HepG2 (cell line): ENCODE measurements at regions of chr1 and their contacts with region 1.

Region 1: GRCh38 chr1:64136752-64137411 is 66.5 kb upstream of the UBE2U start:
- DNase-seq: peak; percentile 56
- ATAC-seq: peak; percentile 90
- H3K4me3 ChIP-seq: no peak overlapping the region
- H3K27ac ChIP-seq: no peak overlapping the region
- H3K4me1 ChIP-seq: no peaks in the 10 kb centered on the region
- H3K27me3 ChIP-seq: no peaks in the 10 kb centered on the region
- CTCF ChIP-seq: peak; percentile 82
- EP300 ChIP-seq: no peak
- POLR2A ChIP-seq: no peak
- RAD21 ChIP-seq: peak; percentile 46; the same call in 1 of the 2 replicates

Region 2: GRCh38 chr1:63557365-63557987 is 579.4 kb before region 1 on chr1:
- CTCF ChIA-PET with region 1: no interaction called
- POLR2A ChIA-PET with region 1: no interaction called
- in situ Hi-C with region 1: no loop called
- intact Hi-C with region 1: loop called (anchors 1 kb)
- DNase-seq: peak; percentile 24
- ATAC-seq: peak; percentile 73
- H3K4me3 ChIP-seq: no peak overlapping the region
- H3K27ac ChIP-seq: no peak overlapping the region
- H3K4me1 ChIP-seq: no peaks in the 10 kb centered on the region
- H3K27me3 ChIP-seq: no peaks in the 10 kb centered on the region
- CTCF ChIP-seq: peak; percentile 62
- EP300 ChIP-seq: no peak
- POLR2A ChIP-seq: no peak
- RAD21 ChIP-seq: no peak

Region 3: GRCh38 chr1:63615768-63616420 is 521.0 kb before region 1 on chr1:
- CTCF ChIA-PET with region 1: interaction called, 21 read pairs
- POLR2A ChIA-PET with region 1: no interaction called
- in situ Hi-C with region 1: loop called (anchors 5 kb)
- intact Hi-C with region 1: loop called (anchors 1 kb)
- DNase-seq: peak; percentile 67
- ATAC-seq: peak; percentile 86
- H3K4me3 ChIP-seq: no peak overlapping the region
- H3K27ac ChIP-seq: no peak overlapping the region
- H3K4me1 ChIP-seq: peaks cover 62% of the 10 kb centered on the region
- H3K27me3 ChIP-seq: no peaks in the 10 kb centered on the region
- CTCF ChIP-seq: peak; percentile 77
- EP300 ChIP-seq: no peak
- POLR2A ChIP-seq: no peak
- RAD21 ChIP-seq: peak; percentile 51; the same call in 1 of the 2 replicates

Region 4: DNA sequence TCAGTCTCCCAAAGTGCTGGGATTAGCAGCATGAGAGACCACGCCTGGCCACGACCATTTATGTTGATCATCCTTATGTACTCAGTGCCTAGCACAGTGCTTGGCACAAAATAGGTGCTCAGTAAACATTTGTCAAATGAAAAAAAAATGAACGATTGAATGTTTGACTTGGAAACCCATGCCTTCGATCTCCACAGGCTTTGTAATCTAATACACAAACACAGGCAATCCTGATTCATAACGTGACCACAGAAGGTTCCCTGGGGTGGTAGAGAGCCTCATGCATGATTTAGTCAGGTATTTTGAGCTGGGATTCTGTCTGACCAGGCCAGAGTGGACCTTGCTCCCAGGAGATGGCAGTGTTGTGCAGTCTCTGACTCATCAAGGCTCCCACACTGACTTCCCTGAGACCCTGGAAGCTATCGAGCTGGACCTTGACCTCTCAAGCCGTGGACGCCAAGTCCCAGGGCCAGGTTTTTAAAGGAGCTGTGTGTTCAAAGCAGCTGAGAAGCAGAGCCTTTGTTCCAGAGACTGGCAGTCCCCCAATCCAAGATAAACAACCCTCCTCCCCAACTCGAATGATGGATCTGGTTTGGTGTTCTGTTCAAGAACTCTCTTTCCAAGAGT is 462.5 kb before region 1 on chr1:
- CTCF ChIA-PET with region 1: interaction called, 6 read pairs
- POLR2A ChIA-PET with region 1: interaction called, 4 read pairs
- in situ Hi-C with region 1: loop called (anchors 10 kb)
- intact Hi-C with region 1: loop called (anchors 1 kb)
- DNase-seq: peak; percentile 94
- ATAC-seq: peak; percentile 95
- H3K4me3 ChIP-seq: 0 out of 6 replicates have a peak overlapping the region, but pooled peaks of 1 of the 3 experiments have one; percentile 6
- H3K27ac ChIP-seq: peak overlapping the region; percentile 54
- H3K4me1 ChIP-seq: peaks cover 38% of the 10 kb centered on the region
- H3K27me3 ChIP-seq: no peaks in the 10 kb centered on the region
- CTCF ChIP-seq: peak; percentile 96
- EP300 ChIP-seq: no peak; a peak in 1 of 4 replicates
- POLR2A ChIP-seq: no peak
- RAD21 ChIP-seq: peak; percentile 71

Region 5: DNA sequence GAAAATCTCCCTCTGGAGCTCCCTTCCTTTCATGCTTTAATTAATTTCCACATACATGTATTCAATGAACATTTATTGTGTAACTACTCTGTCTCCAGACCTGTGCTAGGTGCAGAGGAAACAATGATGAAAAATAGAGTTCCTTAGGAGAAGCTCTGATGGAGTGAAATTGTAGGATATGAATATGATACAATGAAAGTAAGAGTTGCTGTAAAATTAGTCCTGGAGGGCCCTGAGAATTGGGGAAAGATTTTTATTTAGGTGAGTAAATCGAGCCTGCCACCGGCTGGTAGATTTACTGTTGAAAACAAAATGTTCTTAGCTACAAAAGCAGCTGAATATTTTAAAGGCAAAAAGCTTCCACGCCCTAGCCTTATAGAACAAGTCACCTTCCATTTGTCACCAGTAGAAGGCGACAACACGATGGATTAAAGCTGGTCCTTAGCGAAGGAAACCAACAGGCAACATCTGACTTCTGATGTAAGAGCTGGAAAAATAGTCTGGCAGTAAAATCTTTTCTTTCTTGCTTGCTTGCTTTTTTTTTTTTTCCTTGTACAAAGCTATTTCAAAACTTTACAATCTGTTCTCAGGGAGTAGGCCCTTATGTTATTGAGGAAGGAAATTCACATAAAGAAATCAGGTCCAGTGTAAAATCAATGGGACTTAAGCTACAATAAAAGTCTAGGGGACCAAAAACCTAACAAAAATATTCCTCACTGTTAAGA is 445.0 kb before region 1 on chr1:
- CTCF ChIA-PET with region 1: interaction called, 5 read pairs
- POLR2A ChIA-PET with region 1: no interaction called
- in situ Hi-C with region 1: no loop called
- intact Hi-C with region 1: loop called (anchors 2 kb)
- DNase-seq: peak; percentile 71
- ATAC-seq: peak; percentile 93
- H3K4me3 ChIP-seq: no peak overlapping the region
- H3K27ac ChIP-seq: no peak overlapping the region
- H3K4me1 ChIP-seq: peaks cover 37% of the 10 kb centered on the region
- H3K27me3 ChIP-seq: no peaks in the 10 kb centered on the region
- CTCF ChIP-seq: peak; percentile 84
- EP300 ChIP-seq: no peak
- POLR2A ChIP-seq: no peak
- RAD21 ChIP-seq: peak; percentile 69

Region 6: DNA sequence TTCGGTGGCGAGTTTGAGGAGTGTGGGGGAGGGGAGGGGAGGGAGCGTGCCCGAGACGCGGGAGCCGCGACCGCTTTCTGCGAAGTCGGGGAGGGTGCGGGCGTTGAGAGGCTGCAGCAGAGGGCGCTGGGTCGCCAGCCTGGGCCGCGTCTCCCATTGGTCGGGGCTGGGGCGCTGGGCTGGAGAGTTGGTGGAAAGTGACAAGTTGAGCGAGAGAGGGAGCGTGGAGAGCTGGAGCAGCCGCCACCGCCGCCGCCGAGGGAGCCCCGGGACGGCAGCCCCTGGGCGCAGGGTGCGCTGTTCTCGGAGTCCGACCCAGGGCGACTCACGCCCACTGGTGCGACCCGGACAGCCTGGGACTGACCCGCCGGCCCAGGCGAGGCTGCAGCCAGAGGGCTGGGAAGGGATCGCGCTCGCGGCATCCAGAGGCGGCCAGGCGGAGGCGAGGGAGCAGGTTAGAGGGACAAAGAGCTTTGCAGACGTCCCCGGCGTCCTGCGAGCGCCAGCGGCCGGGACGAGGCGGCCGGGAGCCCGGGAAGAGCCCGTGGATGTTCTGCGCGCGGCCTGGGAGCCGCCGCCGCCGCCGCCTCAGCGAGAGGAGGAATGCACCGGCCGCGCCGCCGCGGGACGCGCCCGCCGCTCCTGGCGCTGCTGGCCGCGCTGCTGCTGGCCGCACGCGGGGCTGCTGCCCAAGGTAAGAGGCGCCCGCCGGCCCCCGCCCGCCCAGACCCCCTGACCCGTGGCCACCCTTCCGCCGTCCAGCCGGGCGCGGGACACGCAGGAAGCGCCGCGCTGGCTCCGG is 362.9 kb before region 1 on chr1 and contains the start of gene ROR1:
- CTCF ChIA-PET with region 1: no interaction called
- POLR2A ChIA-PET with region 1: no interaction called
- in situ Hi-C with region 1: no loop called
- intact Hi-C with region 1: loop called (anchors 2 kb)
- DNase-seq: peak; percentile 60
- ATAC-seq: peak; percentile 97
- H3K4me3 ChIP-seq: peak within 1 kb of the TSS; percentile 61 to 80 (median 70)
- H3K27ac ChIP-seq: no peak within 1 kb of the TSS
- H3K4me1 ChIP-seq: peaks cover 40% of the 10 kb centered on the region
- H3K27me3 ChIP-seq: peaks cover 0 to 22% of the 10 kb centered on the region in 2 experiments; a peak in 1 of 5 replicates
- CTCF ChIP-seq: peak; percentile 92
- EP300 ChIP-seq: no peak
- POLR2A ChIP-seq: no peak
- RAD21 ChIP-seq: peak; percentile 45
- total RNA-seq, gene ROR1: 1.6 and 2.3 TPM in 2 replicates

Region 7: DNA sequence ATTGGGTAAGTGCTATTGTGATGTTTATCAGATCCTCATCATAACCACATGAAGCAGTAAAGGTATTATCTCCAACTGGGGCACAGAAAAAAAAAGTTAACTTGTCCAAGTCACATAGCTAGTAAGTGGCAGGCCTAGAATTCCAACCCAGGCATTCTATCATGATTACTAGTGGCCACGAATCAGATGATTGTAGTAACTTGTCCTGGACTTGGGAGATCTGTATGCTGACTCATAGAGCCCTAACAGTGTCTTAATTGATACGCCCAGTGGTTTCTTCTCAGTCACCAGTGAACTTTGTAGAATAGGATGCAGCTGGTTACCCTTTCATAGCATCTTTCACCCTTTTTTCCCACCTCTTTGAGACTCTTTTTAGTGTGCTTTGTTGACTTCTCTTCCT is 24.6 kb before region 1 on chr1:
- CTCF ChIA-PET with region 1: no interaction called
- POLR2A ChIA-PET with region 1: no interaction called
- in situ Hi-C with region 1: no loop called
- intact Hi-C with region 1: no loop called
- DNase-seq: no peak
- ATAC-seq: no peak
- H3K4me3 ChIP-seq: no peak overlapping the region
- H3K27ac ChIP-seq: no peak overlapping the region
- H3K4me1 ChIP-seq: no peaks in the 10 kb centered on the region
- H3K27me3 ChIP-seq: no peaks in the 10 kb centered on the region
- CTCF ChIP-seq: no peak
- EP300 ChIP-seq: no peak
- POLR2A ChIP-seq: no peak
- RAD21 ChIP-seq: no peak